Esophagus muscularis mucosa (tissue), 4 donors: ENCODE measurements at regions of chr1 and their contacts with region 1.

Region 1: DNA sequence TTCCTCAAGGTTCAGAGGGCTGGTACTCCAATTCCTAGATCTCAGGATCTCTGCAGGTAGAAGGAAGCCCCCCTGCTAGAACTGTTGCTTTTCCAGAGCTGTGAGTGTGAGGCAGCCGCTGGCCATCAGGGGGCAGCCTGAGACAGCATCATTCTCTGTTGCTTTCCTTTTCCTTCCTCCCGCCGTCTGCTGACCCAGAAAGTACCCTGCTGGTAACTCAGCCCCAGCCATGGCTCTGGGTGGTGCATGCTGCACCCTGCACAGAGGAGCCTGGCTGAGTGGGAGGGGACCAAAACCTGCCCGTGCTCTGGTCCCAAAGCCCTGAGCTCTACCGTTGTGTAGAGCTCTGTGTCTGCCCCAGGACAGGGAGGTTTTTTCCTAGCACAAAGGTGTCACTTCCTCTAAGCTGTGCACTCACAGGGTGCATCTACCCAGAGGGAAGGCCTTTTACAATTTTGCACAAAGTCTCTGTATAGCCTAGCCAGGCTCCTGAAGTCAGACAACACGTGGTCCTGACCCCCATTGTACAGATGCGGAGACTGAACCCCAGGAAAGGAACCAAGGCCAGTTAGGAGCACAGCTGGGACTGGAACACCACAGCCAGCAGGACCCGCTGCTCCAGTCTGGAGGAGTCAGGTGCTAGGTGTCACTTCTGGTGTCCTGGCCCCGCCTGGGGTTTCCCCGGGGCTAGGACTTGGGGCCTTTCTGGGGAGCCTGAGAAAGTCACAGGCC is 5.6 kb upstream of the FAM131C start:
- DNase-seq: peak; percentile 95
- H3K4me3 ChIP-seq: no peak overlapping the region
- H3K27ac ChIP-seq: no peak overlapping the region
- H3K4me1 ChIP-seq: peaks cover 24 to 40% (median 32%) of the 10 kb centered on the region in 4 donors
- H3K27me3 ChIP-seq: no peaks in the 10 kb centered on the region
- CTCF ChIP-seq: peak; percentile 85 to 98 (median 85)
- EP300 ChIP-seq: no peak
- POLR2A ChIP-seq: no peak

Region 2: GRCh38 chr1:16187748-16188401 is 108.8 kb after region 1 on chr1:
- intact Hi-C with region 1: loop called (anchors 1 kb)
- DNase-seq: no peak
- H3K4me3 ChIP-seq: no peak overlapping the region
- H3K27ac ChIP-seq: no peak overlapping the region
- H3K4me1 ChIP-seq: peaks cover 8 to 33% (median 25%) of the 10 kb centered on the region in 4 donors
- H3K27me3 ChIP-seq: no peaks in the 10 kb centered on the region
- CTCF ChIP-seq: peak; percentile 98 to 99 (median 98)
- EP300 ChIP-seq: no peak
- POLR2A ChIP-seq: no peak

Region 3: GRCh38 chr1:16366722-16367257 is 287.7 kb after region 1 on chr1 and contains the start of gene SZRD1:
- intact Hi-C with region 1: loop called (anchors 10 kb)
- DNase-seq: peak; percentile 99
- H3K4me3 ChIP-seq: peak within 1 kb of the TSS; percentile 74 to 97 (median 84)
- H3K27ac ChIP-seq: peak within 1 kb of the TSS; percentile 97 to 98 (median 98)
- H3K4me1 ChIP-seq: peaks cover 40 to 69% (median 69%) of the 10 kb centered on the region in 4 donors
- H3K27me3 ChIP-seq: no peaks in the 10 kb centered on the region
- CTCF ChIP-seq: peak in 1 of 3 experiments; percentile 5
- EP300 ChIP-seq: no peak
- POLR2A ChIP-seq: no peak
- total RNA-seq, gene SZRD1: 70.2 to 110 (median 98.3) TPM